ENCODE measurements at regions of chr18 and their contacts with region 1.

Region 1: DNA sequence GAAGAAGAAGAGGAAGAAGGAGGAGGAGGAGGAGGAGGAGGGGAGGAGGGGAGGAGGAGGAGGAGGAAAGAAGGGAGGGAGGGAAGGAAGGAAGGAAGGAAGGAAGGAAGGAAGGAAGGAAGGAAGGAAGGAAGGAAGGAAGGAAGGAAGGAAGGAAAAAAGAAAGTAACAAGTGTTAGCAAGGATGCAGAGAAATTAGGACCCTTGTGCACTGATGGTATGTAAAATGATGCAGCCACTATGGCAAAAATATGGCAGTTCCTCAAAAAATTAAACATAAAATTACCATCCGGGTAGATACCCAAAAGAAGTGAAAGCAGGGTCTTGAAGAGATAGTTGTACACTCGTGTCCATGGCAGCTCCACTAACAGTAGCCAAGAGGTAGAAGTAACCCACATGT is 67.4 kb downstream of the DYM start:
- DNase-seq: no peak
- ATAC-seq: no peak

Region 2: DNA sequence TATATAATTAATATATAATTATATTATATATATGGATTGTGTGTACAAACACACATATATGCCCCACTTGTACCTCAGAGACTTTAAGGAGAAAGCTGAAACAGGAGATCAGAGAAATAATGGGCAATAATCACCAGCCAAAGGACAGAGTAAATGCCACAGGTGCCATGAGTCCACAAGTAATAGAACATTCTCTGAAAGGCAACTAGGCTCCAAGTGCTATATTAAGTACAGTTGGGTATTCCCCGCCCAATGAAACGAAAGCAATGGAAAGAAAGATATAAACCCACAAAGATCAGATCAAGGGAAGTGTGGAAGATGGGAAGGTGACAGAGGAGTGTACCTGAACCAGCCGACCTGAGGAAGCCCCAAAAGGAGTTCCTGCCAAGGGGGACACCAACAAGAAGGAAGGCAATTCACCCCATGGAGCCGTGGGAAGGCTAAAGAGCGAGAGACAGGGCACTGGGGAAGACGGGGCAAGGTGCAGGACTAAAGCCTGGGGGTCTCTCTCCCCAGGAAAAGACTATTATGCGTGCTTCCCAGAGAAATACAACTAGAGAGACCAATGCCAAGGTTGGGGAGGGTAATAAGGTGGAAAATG is 48.4 kb after region 1 on chr18:
- intact Hi-C with region 1: loop called (anchors 5 kb)
- DNase-seq: no peak
- ATAC-seq: no peak